ENCODE measurements at regions of chr2 and their contacts with region 1.

Region 1: GRCh38 chr2:38076606-38077430 is 867 bp upstream of the CYP1B1 start:
- DNase-seq: peak; percentile 63
- H3K4me3 Mint-ChIP-seq: peak overlapping the region; percentile 80
- H3K27ac Mint-ChIP-seq: peak overlapping the region; percentile 84
- H3K4me1 Mint-ChIP-seq: peaks cover 51% of the 10 kb centered on the region
- H3K27me3 Mint-ChIP-seq: peaks cover 38% of the 10 kb centered on the region

Region 2: GRCh38 chr2:37672104-37672869 is 404.5 kb before region 1 on chr2:
- intact Hi-C with region 1: loop called (anchors 10 kb)
- DNase-seq: peak; percentile 59
- H3K4me3 Mint-ChIP-seq: peak overlapping the region; percentile 83
- H3K27ac Mint-ChIP-seq: peak overlapping the region; percentile 67
- H3K4me1 Mint-ChIP-seq: peaks cover 38% of the 10 kb centered on the region
- H3K27me3 Mint-ChIP-seq: peaks cover 8% of the 10 kb centered on the region

Region 3: DNA sequence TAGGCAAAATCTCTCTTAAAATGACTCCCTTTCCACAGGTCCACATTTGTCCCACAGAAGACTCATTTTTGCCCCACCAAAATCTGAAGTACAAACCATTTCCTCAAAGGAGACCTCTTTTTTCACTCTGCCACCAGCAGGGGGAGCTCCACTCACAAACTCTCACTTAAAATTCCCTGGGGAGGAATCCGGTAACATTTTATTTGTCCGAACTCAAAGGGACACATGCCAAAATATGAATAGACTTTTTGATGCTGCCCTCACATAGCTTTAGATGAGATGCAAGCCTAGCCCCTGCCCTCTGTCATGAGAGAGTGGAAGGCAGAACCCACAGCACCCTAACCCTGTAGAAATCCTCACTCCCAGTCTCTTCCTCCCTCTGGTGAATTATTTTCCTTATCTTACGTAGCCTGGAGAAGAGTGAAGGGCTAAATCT is 94.7 kb before region 1 on chr2:
- intact Hi-C with region 1: loop called (anchors 2 kb)
- DNase-seq: peak; percentile 16
- H3K4me3 Mint-ChIP-seq: no peak overlapping the region
- H3K27ac Mint-ChIP-seq: no peak overlapping the region
- H3K4me1 Mint-ChIP-seq: peaks cover 14% of the 10 kb centered on the region
- H3K27me3 Mint-ChIP-seq: peaks cover 9% of the 10 kb centered on the region

Region 4: GRCh38 chr2:38095996-38096861 is 19.4 kb after region 1 on chr2:
- intact Hi-C with region 1: loop called (anchors 1 kb)
- DNase-seq: no peak
- H3K4me3 Mint-ChIP-seq: no peak overlapping the region
- H3K27ac Mint-ChIP-seq: peak overlapping the region; percentile 29
- H3K4me1 Mint-ChIP-seq: peaks cover 63% of the 10 kb centered on the region
- H3K27me3 Mint-ChIP-seq: peaks cover 41% of the 10 kb centered on the region

Region 5: DNA sequence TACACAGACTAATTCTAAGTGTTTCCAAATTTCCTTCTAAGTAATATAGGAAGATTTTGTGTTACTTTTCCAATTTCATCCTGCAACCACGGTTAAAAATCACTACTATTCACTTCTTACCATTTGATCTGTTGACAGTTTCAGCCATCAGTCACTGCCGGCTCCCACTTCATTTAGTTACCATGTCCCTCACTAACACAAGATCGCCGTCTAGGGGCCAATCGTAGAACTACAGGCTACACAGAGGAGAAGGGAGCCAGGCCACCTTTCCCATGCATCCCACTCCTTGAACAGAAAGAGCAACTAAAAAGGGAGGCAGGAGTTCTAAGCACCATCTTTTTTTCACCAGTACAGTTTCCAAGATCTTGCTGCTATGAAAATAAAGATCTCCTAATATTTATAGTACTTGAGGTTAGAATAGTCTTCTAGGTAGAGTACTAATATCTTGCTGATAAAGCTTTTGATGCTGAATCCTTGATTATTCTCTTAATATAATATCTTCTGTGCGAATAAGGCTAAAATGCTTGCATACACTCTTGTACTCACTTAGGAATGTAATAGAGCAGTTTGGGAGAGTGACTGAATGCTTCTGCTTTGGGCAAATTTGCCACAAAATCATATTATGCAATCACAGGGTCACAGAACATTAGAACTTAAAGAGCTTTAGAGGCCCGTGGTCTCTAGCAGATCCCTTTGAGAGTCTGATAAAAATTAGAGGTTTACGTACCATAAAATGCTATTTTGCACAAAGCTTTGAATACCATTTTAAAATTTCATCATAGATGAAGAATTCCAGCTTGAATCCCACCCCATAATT is 38.6 kb after region 1 on chr2:
- intact Hi-C with region 1: loop called (anchors 1 kb)
- DNase-seq: peak; percentile 47
- H3K4me3 Mint-ChIP-seq: no peak overlapping the region
- H3K27ac Mint-ChIP-seq: no peak overlapping the region
- H3K4me1 Mint-ChIP-seq: no peaks in the 10 kb centered on the region
- H3K27me3 Mint-ChIP-seq: peaks cover 3% of the 10 kb centered on the region

Region 6: DNA sequence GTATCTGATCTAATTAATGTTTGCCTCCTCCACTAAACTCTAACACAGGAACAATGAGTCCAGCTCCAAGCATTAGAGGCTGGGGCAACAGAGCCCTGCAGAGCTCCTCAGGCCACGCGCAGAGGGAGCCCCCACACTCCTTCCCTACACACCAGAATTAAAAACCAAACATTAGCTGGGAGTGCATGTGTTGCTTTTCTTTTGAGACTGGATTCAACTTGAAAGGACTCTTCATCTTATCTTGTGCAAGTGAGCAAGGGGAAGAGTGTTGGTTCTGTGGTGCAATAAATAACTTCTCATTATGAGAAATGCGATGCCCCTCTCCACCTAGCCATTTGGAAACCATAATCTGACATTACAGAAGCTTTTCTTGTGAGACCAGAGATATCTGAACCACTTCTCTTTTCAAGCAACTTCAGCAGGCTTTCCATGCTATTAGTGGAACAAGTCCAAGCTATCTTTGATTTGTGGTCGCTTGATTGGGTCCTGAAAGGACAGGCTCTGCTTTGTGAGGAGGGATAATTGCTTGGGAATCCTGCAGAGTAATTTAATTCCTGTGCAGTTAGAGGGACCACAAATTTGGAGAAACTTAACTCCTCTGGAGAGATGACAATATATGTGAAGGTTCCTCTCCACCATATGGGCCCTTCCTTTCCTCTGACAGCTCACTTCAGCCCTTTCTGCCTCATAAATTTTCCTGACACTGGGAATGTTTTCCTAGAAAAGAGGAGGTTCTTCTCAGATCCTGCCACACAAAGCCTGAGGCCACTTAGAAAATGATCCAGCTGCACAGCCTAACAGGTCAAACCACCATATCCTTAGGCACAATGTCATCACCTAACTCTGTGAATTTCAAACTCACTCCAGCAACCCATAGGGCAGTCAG is 187.8 kb after region 1 on chr2:
- intact Hi-C with region 1: loop called (anchors 2 kb)
- DNase-seq: no peak
- H3K4me3 Mint-ChIP-seq: no peak overlapping the region
- H3K27ac Mint-ChIP-seq: no peak overlapping the region
- H3K4me1 Mint-ChIP-seq: peaks cover 35% of the 10 kb centered on the region
- H3K27me3 Mint-ChIP-seq: peaks cover 2% of the 10 kb centered on the region

Measured in activated T-helper 1 cell treated with anti-CD3 and anti-CD28 coated beads, Interleukin-12 subunit alpha, Interleukin-12 subunit beta, Interleukin-2, Interleukin-4 antibody, amounts not matched to agents 30 ng/mL and 10 ng/mL and 1 ng/mL, durations not matched to agents 14 hours and 24 hours and 36 hours (primary cell).